ENCODE measurements at regions of chr4 and their contacts with region 1.

Region 1: GRCh38 chr4:155953151-155954114 is at the start of gene CTSO:
- DNase-seq: peak; percentile 20 to 81
- H3K4me3 ChIP-seq: peak within 1 kb of the TSS; percentile 85 to 98
- H3K27ac ChIP-seq: peak within 1 kb of the TSS; percentile 98
- H3K4me1 ChIP-seq: peaks cover 0 to 4% of the 10 kb centered on the region in 2 donors
- H3K27me3 ChIP-seq: no peaks in the 10 kb centered on the region
- CTCF ChIP-seq: peak; percentile 37 to 80 (median 52)
- total RNA-seq, gene CTSO: 7.5 TPM

Region 2: GRCh38 chr4:155376387-155377268 is 576.8 kb before region 1 on chr4 and contains the start of gene MAP9:
- intact Hi-C with region 1: loop called (anchors 10 kb)
- DNase-seq: peak; percentile 73 to 95
- H3K4me3 ChIP-seq: peak within 1 kb of the TSS; percentile 56 to 93
- H3K27ac ChIP-seq: peak within 1 kb of the TSS; percentile 31 to 58
- H3K4me1 ChIP-seq: no peaks in the 10 kb centered on the region
- H3K27me3 ChIP-seq: no peaks in the 10 kb centered on the region
- CTCF ChIP-seq: no peak
- total RNA-seq, gene MAP9: 5.2 TPM

Region 3: DNA sequence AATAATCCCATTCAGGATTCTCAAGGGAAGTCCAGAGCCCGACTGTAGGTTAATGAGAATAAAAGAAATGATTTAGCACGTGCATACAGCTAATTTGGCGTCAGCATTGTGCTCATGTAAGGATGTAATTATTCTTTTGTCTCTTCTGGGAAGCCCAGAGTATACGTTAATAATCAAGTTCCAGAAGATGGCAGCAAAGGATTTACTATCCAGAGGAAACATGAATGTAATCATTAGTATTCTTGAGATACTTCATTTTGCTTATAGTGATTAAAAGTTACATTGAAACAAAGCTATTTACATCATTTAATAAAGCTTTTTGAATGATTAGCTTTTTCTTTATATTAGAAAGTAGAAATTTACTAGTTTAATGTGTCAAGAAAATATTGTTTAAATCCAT is 549.5 kb before region 1 on chr4:
- intact Hi-C with region 1: loop called (anchors 1 kb)
- DNase-seq: no peak
- H3K4me3 ChIP-seq: no peak overlapping the region
- H3K27ac ChIP-seq: no peak overlapping the region
- H3K4me1 ChIP-seq: no peaks in the 10 kb centered on the region
- H3K27me3 ChIP-seq: no peaks in the 10 kb centered on the region
- CTCF ChIP-seq: peak; percentile 13 to 51 (median 19)

Region 4: DNA sequence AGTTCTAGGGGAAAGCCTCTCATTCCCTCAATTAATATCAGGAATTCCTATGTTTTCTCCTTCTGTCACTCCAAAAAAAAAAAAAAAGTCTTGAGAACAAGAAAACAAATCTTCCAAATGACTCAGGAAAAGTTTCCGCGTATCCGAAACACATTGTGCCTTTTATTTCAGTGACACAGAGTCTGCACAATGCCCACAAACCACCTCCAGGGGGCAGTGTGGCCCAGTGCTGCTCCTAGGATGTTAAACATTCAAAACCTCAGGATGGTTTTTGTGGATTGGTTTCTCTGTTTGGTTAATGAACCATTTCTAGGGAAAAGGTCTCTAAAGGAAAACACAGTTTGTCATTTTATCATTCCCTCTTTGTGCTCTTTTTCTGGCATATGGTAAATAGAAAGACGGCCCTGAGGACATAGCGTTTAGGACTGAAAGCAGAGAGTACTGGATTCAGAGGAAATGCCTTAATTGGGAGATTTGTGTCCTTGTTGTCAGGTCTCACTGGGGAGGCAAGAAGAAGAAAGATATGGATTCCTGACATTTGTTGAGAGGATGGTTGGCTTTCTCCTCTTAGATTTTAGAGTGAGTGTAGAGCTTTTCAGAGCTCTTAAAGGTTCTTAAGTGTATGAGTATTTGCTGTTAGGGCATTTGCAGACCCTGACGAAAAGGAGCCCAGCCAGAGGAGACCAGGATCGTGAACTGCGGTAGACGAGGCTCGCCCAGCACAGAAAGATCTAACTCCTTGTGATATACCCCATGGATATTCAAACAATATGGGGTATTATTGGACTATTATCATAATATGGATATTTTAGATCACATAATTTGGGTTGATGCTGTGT is 510.9 kb before region 1 on chr4:
- intact Hi-C with region 1: loop called (anchors 5 kb)
- DNase-seq: peak; percentile 35 to 92
- H3K4me3 ChIP-seq: peak overlapping the region in 1 of 2 donors; percentile 42
- H3K27ac ChIP-seq: peak overlapping the region in 1 of 2 donors; percentile 57
- H3K4me1 ChIP-seq: peaks cover 0 to 6% of the 10 kb centered on the region in 2 donors
- H3K27me3 ChIP-seq: no peaks in the 10 kb centered on the region
- CTCF ChIP-seq: peak; percentile 72 to 95 (median 87)

Region 5: GRCh38 chr4:155529272-155529671 is 424.2 kb before region 1 on chr4:
- intact Hi-C with region 1: loop called (anchors 5 kb)
- DNase-seq: no peak
- H3K4me3 ChIP-seq: no peak overlapping the region
- H3K27ac ChIP-seq: no peak overlapping the region
- H3K4me1 ChIP-seq: peaks cover 0 to 4% of the 10 kb centered on the region in 2 donors
- H3K27me3 ChIP-seq: no peaks in the 10 kb centered on the region
- CTCF ChIP-seq: peak in 1 of 3 experiments; percentile 28

Region 6: DNA sequence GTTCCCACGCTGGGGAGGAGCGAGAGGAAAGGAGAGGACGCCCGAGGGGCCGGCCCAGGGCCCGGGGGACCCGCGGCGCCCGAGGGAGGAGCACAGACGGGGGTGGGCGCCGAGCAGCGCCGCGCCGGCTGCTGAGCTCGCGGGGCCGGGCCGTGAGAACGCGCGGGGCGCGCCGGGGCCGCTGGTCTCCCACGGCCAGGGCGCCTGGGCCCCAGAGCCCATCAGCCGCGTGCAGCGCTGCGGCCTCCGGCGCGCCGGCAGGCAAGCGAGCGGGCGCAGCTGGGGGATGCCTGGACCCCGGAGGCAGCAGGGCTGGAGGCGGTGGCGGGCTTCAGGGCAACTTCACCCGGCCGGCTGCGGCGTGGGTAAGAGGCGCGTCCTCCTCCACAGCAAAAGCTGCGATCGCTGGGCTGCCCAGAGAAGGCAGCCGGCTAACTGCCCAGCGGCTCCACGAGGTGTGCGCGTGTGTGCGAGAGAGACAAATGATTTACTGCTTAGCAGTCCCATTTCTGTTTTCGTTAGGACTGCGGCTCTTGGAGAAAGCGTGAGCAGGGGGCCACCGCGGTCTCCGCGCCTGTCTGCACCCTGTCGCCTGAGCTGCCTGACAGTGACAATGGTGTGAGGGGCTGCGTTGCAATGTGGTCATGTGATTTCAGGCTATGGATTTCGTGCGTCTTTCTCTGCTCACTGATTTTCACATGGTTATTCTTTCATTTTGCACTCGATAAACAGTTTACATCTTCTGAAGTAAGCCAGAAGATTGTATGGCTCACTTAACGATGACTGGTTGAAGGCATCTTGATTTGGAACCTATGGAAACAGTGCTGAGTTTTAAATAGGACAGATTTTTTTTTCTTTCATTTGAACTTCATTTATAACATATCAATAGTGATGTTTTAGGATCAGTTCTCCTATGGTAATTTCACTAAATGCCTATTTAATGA is 285.6 kb before region 1 on chr4:
- intact Hi-C with region 1: loop called (anchors 2 kb)
- DNase-seq: peak in 1 of 2 donors; percentile 73
- H3K4me3 ChIP-seq: peak overlapping the region; percentile 58 to 85
- H3K27ac ChIP-seq: peak overlapping the region; percentile 90 to 97
- H3K4me1 ChIP-seq: peaks cover 0 to 16% of the 10 kb centered on the region in 2 donors
- H3K27me3 ChIP-seq: no peaks in the 10 kb centered on the region
- CTCF ChIP-seq: no peak

Region 7: DNA sequence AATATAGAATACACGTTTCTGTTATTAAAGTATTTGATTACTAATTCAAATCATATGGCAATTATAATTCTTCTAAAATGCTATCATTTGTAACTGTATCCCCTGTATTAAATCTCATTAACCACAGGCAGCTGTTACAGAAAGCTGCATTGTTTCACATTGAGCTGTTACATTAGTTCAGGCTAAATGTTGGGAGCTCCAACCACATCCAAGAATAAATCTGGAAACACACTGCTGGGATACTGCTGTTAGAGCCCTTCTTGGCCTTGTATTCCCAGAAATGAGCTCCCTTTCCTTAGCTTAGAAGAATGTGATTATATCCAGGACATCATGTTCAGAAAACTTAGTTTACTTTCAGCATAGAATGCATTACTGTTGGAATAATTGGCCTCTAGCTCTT is 146.4 kb before region 1 on chr4:
- intact Hi-C with region 1: loop called (anchors 2 kb)
- DNase-seq: no peak
- H3K4me3 ChIP-seq: no peak overlapping the region
- H3K27ac ChIP-seq: no peak overlapping the region
- H3K4me1 ChIP-seq: peaks cover 0 to 8% of the 10 kb centered on the region in 2 donors
- H3K27me3 ChIP-seq: no peaks in the 10 kb centered on the region
- CTCF ChIP-seq: no peak